PC-9 (cell line): ENCODE measurements at regions of chr19 and their contacts with region 1.

Region 1: GRCh38 chr19:35596366-35596999 is 10.5 kb downstream of the PMIS2 start:
- DNase-seq: no peak
- H3K4me3 ChIP-seq: no peak overlapping the region
- H3K27ac ChIP-seq: no peak overlapping the region
- H3K4me1 ChIP-seq: peaks cover 12% of the 10 kb centered on the region; the same call in 1 of the 2 replicates
- H3K27me3 ChIP-seq: no peaks in the 10 kb centered on the region
- CTCF ChIP-seq: no peak

Region 2: GRCh38 chr19:34618410-34618809 is 978.1 kb before region 1 on chr19:
- CTCF ChIA-PET with region 1: interaction called, 16 read pairs
- POLR2A ChIA-PET with region 1: no interaction called
- intact Hi-C with region 1: no loop called
- DNase-seq: no peak
- H3K4me3 ChIP-seq: no peak overlapping the region
- H3K27ac ChIP-seq: no peak overlapping the region
- H3K4me1 ChIP-seq: no peaks in the 10 kb centered on the region
- H3K27me3 ChIP-seq: no peaks in the 10 kb centered on the region
- CTCF ChIP-seq: no peak

Region 3: GRCh38 chr19:35908973-35909683 is 312.6 kb after region 1 on chr19:
- CTCF ChIA-PET with region 1: no interaction called
- POLR2A ChIA-PET with region 1: interaction called, 14 read pairs
- intact Hi-C with region 1: no loop called
- DNase-seq: no peak
- H3K4me3 ChIP-seq: no peak overlapping the region
- H3K27ac ChIP-seq: no peak overlapping the region
- H3K4me1 ChIP-seq: no peaks in the 10 kb centered on the region
- H3K27me3 ChIP-seq: no peaks in the 10 kb centered on the region
- CTCF ChIP-seq: no peak